ENCODE measurements at regions of chr6 and their contacts with region 1.

Region 1: GRCh38 chr6:122530440-122531046 is 58.9 kb upstream of the SERINC1 start:
- DNase-seq: peak; percentile 18 to 77 (median 54)
- ATAC-seq: peak; percentile 99
- H3K4me3 ChIP-seq: no peak overlapping the region
- H3K4me3 Mint-ChIP-seq: no peak overlapping the region
- H3K27ac ChIP-seq: no peak overlapping the region
- H3K27ac Mint-ChIP-seq: no peak overlapping the region
- H3K4me1 ChIP-seq: no peaks in the 10 kb centered on the region
- H3K4me1 Mint-ChIP-seq: no peaks in the 10 kb centered on the region
- H3K27me3 ChIP-seq: no peaks in the 10 kb centered on the region
- H3K27me3 Mint-ChIP-seq: peaks cover 28% of the 10 kb centered on the region
- CTCF ChIP-seq: peak; percentile 85

Region 2: GRCh38 chr6:121055572-121056163 is 1474.9 kb before region 1 on chr6:
- CTCF ChIA-PET with region 1: no interaction called
- POLR2A ChIA-PET with region 1: no interaction called
- intact Hi-C with region 1: loop called in 1 of 2 experiments (anchors 5 kb)
- DNase-seq: peak in 2 of 9 experiments; percentile 35 to 45
- ATAC-seq: no peak
- H3K4me3 ChIP-seq: no peak overlapping the region
- H3K4me3 Mint-ChIP-seq: no peak overlapping the region
- H3K27ac ChIP-seq: no peak overlapping the region
- H3K27ac Mint-ChIP-seq: no peak overlapping the region
- H3K4me1 ChIP-seq: no peaks in the 10 kb centered on the region
- H3K4me1 Mint-ChIP-seq: no peaks in the 10 kb centered on the region
- H3K27me3 ChIP-seq: no peaks in the 10 kb centered on the region
- H3K27me3 Mint-ChIP-seq: no peaks in the 10 kb centered on the region
- CTCF ChIP-seq: peak; percentile 67

Region 3: GRCh38 chr6:121430514-121431460 is 1099.8 kb before region 1 on chr6:
- CTCF ChIA-PET with region 1: no interaction called
- POLR2A ChIA-PET with region 1: no interaction called
- intact Hi-C with region 1: loop called in 1 of 2 experiments (anchors 2 kb)
- DNase-seq: no peak
- ATAC-seq: no peak
- H3K4me3 ChIP-seq: no peak overlapping the region
- H3K4me3 Mint-ChIP-seq: no peak overlapping the region
- H3K27ac ChIP-seq: no peak overlapping the region
- H3K27ac Mint-ChIP-seq: no peak overlapping the region
- H3K4me1 ChIP-seq: no peaks in the 10 kb centered on the region
- H3K4me1 Mint-ChIP-seq: peaks cover 3% of the 10 kb centered on the region
- H3K27me3 ChIP-seq: no peaks in the 10 kb centered on the region
- H3K27me3 Mint-ChIP-seq: peaks cover 9% of the 10 kb centered on the region
- CTCF ChIP-seq: no peak

Region 4: DNA sequence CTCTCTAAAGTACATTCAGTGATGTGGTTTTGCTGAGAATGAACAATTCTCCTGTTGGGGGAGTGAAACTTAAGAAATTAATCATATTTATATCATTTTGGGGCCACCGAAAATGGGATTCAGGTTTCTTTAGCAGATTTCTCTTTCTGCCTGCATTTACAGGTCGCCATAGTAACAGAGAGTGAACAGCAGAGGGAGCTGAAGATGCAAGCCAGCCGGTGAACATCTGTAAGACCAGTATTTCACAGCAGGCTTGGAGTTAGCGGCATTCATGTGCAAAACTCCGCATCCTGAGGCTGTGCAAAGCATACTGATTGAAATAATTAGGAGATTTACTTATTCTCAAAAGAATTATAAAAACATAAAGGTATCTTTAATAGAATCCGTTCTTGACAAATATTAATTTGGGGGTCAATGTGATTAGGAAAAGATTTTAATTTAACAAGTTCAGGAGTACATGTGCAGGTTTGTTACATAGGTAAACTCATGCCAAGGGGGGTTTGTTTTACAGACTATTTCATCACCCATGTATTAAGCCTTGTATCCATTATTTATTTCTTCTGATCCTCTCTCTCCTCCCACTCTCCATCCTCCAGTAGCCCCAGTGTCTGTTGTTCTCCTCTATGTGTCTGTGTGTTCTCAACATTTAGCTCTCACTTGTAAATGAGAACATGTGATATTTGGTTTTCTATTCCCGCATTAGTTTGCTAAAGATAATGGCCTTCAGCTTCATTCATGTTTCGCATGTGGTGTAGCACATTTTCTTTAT is 148.9 kb before region 1 on chr6:
- CTCF ChIA-PET with region 1: interaction called, 113 read pairs
- POLR2A ChIA-PET with region 1: no interaction called
- intact Hi-C with region 1: loop called (anchors 1 kb)
- DNase-seq: peak; percentile 27 to 84 (median 62)
- ATAC-seq: peak; percentile 100
- H3K4me3 ChIP-seq: no peak overlapping the region
- H3K4me3 Mint-ChIP-seq: no peak overlapping the region
- H3K27ac ChIP-seq: no peak overlapping the region
- H3K27ac Mint-ChIP-seq: no peak overlapping the region
- H3K4me1 ChIP-seq: no peaks in the 10 kb centered on the region
- H3K4me1 Mint-ChIP-seq: peaks cover 6% of the 10 kb centered on the region
- H3K27me3 ChIP-seq: no peaks in the 10 kb centered on the region
- H3K27me3 Mint-ChIP-seq: no peaks in the 10 kb centered on the region
- CTCF ChIP-seq: peak; percentile 81

Region 5: DNA sequence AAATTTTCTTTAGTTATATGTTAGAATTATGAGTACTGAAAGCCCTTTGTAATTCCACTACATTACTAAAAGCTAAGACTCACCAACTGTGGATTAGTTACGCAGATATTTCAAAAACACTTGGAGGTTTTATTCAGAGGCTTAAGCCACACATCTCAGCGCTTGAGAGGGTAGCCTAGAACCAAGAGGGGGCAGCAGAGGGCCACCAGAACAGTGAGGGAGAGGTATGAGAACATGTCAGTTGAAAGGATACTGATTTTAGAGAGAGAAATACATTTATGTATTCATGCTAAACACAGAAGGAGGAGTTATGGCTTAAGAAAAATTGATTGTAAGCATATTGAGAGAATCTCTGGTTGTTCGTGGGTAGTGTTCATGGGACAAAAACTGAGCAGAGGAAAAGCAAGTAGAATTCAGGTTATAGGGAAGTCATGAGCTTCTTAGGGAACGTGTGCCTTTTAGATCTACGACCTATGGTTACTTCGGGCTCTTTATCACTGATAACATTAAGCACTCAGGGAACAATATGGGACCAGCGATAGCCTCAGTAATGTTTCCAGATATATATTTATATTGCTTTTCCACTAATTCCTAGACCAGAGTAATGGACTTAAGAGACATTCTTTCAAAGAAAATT is 38.5 kb before region 1 on chr6:
- CTCF ChIA-PET with region 1: interaction called, 142 read pairs
- POLR2A ChIA-PET with region 1: no interaction called
- intact Hi-C with region 1: loop called (anchors 1 kb)
- DNase-seq: peak; percentile 41 to 76 (median 70)
- ATAC-seq: peak; percentile 100
- H3K4me3 ChIP-seq: no peak overlapping the region
- H3K4me3 Mint-ChIP-seq: no peak overlapping the region
- H3K27ac ChIP-seq: no peak overlapping the region
- H3K27ac Mint-ChIP-seq: no peak overlapping the region
- H3K4me1 ChIP-seq: peaks cover 4% of the 10 kb centered on the region
- H3K4me1 Mint-ChIP-seq: peaks cover 12% of the 10 kb centered on the region
- H3K27me3 ChIP-seq: no peaks in the 10 kb centered on the region
- H3K27me3 Mint-ChIP-seq: peaks cover under 1% of the 10 kb centered on the region
- CTCF ChIP-seq: peak; percentile 88

Region 6: GRCh38 chr6:122520179-122520578 is 10.4 kb before region 1 on chr6:
- CTCF ChIA-PET with region 1: interaction called, 14 read pairs
- POLR2A ChIA-PET with region 1: no interaction called
- intact Hi-C with region 1: no loop called
- DNase-seq: no peak
- ATAC-seq: no peak
- H3K4me3 ChIP-seq: no peak overlapping the region
- H3K4me3 Mint-ChIP-seq: no peak overlapping the region
- H3K27ac ChIP-seq: no peak overlapping the region
- H3K27ac Mint-ChIP-seq: no peak overlapping the region
- H3K4me1 ChIP-seq: no peaks in the 10 kb centered on the region
- H3K4me1 Mint-ChIP-seq: no peaks in the 10 kb centered on the region
- H3K27me3 ChIP-seq: no peaks in the 10 kb centered on the region
- H3K27me3 Mint-ChIP-seq: peaks cover 32% of the 10 kb centered on the region
- CTCF ChIP-seq: no peak

Measured in CD8-positive, alpha-beta T cell (primary cell).